Psoas muscle (tissue), 8 donors: ENCODE measurements at regions of chr5 and their contacts with region 1.

Region 1: DNA sequence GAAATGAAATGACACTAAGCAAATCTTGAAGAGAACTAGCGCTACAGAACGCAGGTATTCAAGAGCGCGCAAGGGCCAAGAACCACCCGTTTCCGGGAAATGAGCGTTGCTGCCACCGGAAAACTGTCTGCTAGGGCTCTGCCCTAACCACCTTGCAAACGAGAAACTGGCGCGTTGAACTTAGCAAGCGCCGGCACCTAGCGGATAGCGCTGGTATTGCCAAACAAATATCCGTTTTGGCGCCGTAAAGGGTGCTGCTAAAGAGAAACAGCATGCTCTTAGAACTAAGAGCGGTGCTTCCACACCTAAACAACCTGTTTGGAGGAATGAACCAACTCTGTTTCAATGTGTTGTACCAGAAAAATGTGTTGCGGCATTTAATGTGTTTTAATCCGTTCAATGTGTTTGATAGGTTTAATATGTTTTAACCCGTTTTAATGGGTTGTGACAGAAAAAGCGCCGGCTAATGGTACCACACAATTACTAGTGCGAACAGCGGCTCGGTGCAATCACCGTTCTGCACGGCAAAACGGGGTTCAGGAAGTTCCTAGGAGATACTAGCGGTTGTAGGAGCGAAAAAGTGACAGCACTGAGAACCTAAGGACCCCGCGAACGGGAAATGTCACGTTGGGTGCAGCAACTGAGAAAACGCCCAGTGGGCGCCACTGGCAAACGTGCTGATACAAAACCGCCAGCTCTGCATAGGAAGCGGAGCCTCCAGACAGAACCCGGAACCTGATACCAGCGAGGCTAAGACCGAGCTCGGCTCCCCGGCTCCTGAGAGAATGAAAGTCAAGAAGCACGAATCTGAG is at the start of gene ANXA2R:
- DNase-seq: peak; percentile 85 to 92
- ATAC-seq: peak; percentile 62 to 69 (median 67)
- H3K4me3 ChIP-seq: peak within 1 kb of the TSS; percentile 75
- H3K27ac ChIP-seq: peak within 1 kb of the TSS; percentile 96
- H3K4me1 ChIP-seq: peaks cover 31% of the 10 kb centered on the region
- H3K27me3 ChIP-seq: no peaks in the 10 kb centered on the region
- CTCF ChIP-seq: peak; percentile 87
- total RNA-seq, gene ANXA2R: 0.46 to 1.6 (median 0.78) TPM

Region 2: DNA sequence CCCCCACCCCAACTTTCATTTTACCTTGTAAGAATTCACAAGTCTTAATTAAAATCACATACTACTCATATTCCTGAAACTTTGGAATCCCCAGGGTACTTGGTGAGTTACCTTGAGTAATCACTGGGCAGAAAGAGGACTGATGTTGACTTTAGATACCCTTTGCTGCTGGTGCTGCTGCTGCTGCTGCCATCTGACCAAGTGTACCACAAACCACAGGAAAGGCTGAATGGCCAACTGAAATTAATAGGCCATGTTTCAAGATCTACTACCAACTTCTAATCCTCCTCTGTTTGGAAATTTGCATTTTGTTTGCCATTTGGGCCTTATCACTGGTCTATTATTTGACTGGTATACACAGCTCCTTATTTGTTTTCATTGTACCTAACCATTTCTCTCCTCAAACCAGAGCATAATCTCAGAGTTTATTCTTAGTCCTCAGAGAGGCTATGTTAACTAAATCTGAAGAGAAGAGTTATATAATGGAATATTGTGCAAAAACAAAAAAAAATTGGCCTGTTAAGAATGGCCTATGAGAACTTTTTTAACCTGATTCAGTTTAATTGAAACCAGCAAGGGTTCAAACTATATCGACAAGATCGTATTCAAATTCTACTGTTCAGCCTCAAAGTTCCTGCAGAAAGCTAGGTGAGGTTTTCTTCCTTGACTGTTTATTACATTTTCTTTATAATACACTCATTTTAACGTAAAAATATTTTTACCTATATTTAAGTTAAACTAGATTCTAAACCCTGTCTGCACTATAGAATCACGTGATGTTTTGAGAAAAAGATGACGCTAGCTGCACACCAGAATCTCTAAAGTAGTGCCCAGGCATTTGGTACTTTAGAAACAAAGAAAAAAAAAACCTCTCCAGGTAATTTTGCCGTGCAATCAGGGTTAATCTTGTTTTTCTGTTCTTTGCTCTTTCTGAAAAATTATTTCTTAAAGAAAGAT is 241.9 kb before region 1 on chr5:
- intact Hi-C with region 1: no loop called
- DNase-seq: no peak
- ATAC-seq: peak in 1 of 4 donors; percentile 33
- H3K4me3 ChIP-seq: no peak overlapping the region
- H3K27ac ChIP-seq: no peak overlapping the region
- H3K4me1 ChIP-seq: no peaks in the 10 kb centered on the region
- H3K27me3 ChIP-seq: no peaks in the 10 kb centered on the region
- CTCF ChIP-seq: no peak

Region 3: GRCh38 chr5:42950440-42951292 is 89.8 kb before region 1 on chr5:
- intact Hi-C with region 1: loop called in 1 of 2 experiments (anchors 5 kb)
- DNase-seq: peak; percentile 68 to 74
- ATAC-seq: peak; percentile 79 to 87 (median 85)
- H3K4me3 ChIP-seq: peak overlapping the region; percentile 75
- H3K27ac ChIP-seq: peak overlapping the region; percentile 81
- H3K4me1 ChIP-seq: peaks cover 34% of the 10 kb centered on the region
- H3K27me3 ChIP-seq: peaks cover 6 to 88% (median 44%) of the 10 kb centered on the region in 3 donors
- CTCF ChIP-seq: no peak

Region 4: DNA sequence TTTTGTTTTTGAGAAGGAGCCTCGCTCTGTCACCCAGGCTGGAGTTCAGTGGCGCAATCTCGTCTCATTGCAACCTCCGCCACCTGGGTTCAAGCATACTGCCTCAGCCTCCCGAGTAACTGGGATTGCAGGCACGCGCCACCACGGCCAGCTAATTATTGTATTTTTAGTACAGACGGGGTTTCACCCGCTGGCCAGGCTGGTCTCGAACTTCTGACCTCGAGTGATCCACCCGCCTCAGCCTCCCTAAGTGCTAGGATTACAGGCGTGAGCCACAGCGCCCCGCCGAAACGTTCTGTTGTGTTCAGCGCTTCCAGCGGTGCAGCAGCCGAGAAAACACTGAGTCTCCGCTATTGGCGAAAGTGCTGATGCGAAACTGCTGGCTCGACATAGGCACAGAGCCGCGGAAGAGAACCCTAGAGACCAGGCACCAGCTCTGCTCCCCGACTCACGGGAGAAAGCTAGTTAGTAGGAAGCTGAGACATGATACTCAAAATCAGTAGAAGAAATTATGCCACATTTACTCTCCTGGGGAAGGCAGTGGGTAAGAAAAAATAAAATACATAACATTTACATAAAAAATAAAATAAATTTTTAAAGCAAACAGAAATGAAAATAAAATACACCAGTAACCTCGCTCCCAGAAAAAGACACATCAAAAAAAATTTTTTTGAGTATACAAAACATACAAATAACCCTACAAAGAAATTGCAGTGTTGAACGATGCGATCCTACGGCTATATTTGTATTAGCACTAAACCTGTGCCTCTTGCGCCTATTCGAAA is 31.9 kb before region 1 on chr5:
- intact Hi-C with region 1: loop called in 1 of 2 experiments (anchors 5 kb)
- DNase-seq: peak; percentile 87 to 93
- ATAC-seq: peak; percentile 84 to 91 (median 90)
- H3K4me3 ChIP-seq: peak overlapping the region; percentile 74
- H3K27ac ChIP-seq: peak overlapping the region; percentile 90
- H3K4me1 ChIP-seq: no peaks in the 10 kb centered on the region
- H3K27me3 ChIP-seq: peaks cover 0 to 24% (median 19%) of the 10 kb centered on the region in 3 donors
- CTCF ChIP-seq: no peak

Region 5: DNA sequence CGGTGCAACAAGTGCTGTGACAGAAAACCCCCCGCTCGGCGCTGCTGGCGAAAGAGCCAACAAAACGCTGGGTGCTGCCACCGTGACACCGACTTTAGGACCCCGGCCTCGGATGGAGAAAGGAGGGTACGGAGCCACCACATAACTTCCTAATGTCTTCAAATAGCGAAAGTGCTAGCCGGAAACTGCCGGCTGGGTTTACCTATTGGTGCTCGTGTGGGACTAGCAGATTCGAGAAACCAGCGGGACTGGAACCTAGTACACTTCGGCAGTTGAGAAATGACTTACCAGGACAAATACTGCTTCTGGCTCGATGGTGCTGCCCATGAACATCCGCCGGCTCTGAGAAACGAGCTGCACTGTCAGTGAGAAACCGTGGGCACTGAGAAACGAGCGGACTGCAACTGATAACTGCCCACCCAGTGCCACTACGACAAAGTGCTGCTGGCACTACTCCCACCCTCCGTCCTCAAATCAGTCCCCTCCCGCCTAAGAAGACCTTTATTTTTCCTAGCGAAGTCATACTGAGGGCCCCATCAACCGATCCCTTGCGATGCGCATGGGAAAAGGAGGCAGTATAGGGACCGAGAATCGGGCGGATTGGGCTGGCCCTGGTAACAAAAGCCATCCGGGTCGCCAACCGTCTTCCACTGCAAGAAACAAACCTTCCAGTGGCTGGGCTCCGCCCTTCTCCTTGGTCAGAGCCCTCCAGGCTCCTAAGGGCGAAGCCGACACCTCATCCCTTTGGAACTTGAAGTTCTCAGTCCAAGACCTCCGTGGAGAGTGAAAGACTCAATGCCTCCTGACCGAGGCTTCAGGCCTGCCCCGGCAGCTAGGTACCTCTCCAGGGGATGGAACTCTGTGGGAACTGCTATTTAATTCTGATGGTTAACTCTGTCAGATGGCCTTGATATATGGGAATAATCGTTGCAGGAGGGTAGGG is 26.6 kb after region 1 on chr5:
- intact Hi-C with region 1: loop called (anchors 1 kb)
- DNase-seq: peak; percentile 88 to 93
- ATAC-seq: peak; percentile 70 to 75 (median 73)
- H3K4me3 ChIP-seq: peak overlapping the region; percentile 94
- H3K27ac ChIP-seq: peak overlapping the region; percentile 100
- H3K4me1 ChIP-seq: peaks cover 19% of the 10 kb centered on the region
- H3K27me3 ChIP-seq: no peaks in the 10 kb centered on the region
- CTCF ChIP-seq: no peak